GM12878 (cell line): ENCODE measurements at regions of chr19 and their contacts with region 1.

Region 1: DNA sequence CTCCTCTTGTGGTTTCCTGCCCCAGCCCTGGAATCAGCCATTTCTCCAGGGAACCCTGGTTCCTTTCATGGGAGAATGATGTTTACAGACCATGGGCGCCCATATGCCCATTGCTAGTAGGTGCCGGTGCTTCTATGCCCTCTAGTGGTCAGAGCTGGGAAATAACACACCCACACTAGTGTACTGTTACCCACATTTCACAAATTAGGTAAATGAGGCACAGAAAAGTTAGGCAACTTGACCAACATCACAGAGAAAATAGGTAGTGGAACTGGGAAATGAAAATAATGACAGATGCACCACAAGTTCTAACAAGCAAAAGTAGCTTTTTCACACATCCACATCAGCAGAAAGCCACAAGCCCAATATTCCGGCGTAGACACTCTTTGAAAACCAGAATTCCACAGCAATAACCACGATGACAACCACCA is 1.3 kb upstream of the CEACAM3 start:
- DNase-seq: peak; percentile 23
- ATAC-seq: peak; percentile 97
- H3K4me3 ChIP-seq: no peak overlapping the region
- H3K27ac ChIP-seq: no peak overlapping the region
- H3K4me1 ChIP-seq: no peaks in the 10 kb centered on the region; the same call in 1 of the 2 replicates
- H3K27me3 ChIP-seq: peaks cover 0 to 6% of the 10 kb centered on the region in 2 experiments; a peak in 2 of 4 replicates
- CTCF ChIP-seq: peak; percentile 52 to 84 (median 83)
- EP300 ChIP-seq: no peak
- POLR2A ChIP-seq: no peak
- RAD21 ChIP-seq: peak; percentile 16; the same call in 1 of the 2 replicates

Region 2: DNA sequence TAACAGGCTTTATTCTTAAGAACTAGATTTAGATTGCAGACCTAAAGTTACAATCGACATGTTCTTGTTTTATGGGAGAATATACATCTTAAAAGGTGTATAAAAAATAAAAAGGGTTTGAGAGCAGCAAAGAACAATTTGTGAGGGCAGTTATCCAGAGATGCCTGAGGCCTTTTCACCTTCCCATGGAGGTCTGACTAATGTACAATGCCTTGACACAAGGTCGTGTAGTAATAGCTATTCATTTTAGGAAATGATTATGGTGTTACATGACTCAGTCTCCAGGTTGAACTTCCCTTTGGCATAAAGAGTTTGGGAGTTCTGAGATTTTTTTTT is 19.7 kb before region 1 on chr19:
- CTCF ChIA-PET with region 1: interaction called, 16 read pairs
- POLR2A ChIA-PET with region 1: no interaction called
- RAD21 ChIA-PET with region 1: no interaction called
- SMC1A ChIA-PET with region 1: interaction called, 8 read pairs
- in situ Hi-C with region 1: no loop called
- intact Hi-C with region 1: no loop called
- DNase-seq: no peak
- ATAC-seq: no peak
- H3K4me3 ChIP-seq: no peak overlapping the region
- H3K27ac ChIP-seq: no peak overlapping the region
- H3K4me1 ChIP-seq: no peaks in the 10 kb centered on the region
- H3K27me3 ChIP-seq: no peaks in the 10 kb centered on the region; a peak in 3 of 4 replicates
- CTCF ChIP-seq: no peak
- EP300 ChIP-seq: no peak
- POLR2A ChIP-seq: no peak
- RAD21 ChIP-seq: no peak

Region 3: GRCh38 chr19:41821003-41821735 is 26.1 kb after region 1 on chr19:
- CTCF ChIA-PET with region 1: interaction called, 188 read pairs
- POLR2A ChIA-PET with region 1: interaction called, 4 read pairs
- RAD21 ChIA-PET with region 1: interaction called, 37 read pairs
- SMC1A ChIA-PET with region 1: interaction called, 47 read pairs
- in situ Hi-C with region 1: no loop called
- intact Hi-C with region 1: loop called (anchors 1 kb)
- DNase-seq: peak; percentile 12
- ATAC-seq: peak; percentile 93
- H3K4me3 ChIP-seq: no peak overlapping the region
- H3K27ac ChIP-seq: no peak overlapping the region
- H3K4me1 ChIP-seq: no peaks in the 10 kb centered on the region
- H3K27me3 ChIP-seq: no peaks in the 10 kb centered on the region
- CTCF ChIP-seq: peak; percentile 69 to 78 (median 72)
- EP300 ChIP-seq: no peak
- POLR2A ChIP-seq: no peak
- RAD21 ChIP-seq: peak; percentile 94

Region 4: DNA sequence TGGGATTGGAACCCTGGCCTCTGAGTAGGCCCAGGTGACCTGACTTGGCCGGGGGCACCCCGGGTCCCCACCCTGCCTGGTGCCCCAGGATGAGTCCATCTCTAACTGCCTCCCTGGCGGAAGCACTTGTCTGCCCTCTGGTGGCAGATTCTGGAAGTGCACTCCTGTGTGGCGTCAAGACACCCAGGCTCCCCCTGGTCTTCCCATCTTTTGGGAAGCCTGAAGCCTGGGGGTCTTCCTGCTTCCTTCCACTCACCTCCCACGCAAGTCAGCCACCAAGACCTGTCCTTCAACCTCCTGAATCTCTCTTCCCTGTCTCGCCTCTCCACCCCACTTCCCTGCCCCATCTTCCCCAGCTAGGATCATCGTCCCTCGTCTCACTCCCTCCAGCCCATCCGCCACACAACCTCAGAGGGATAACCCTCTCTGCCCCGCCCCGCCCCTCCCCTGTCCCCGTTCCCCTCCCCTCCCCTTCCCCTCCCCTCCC is 156.7 kb after region 1 on chr19:
- CTCF ChIA-PET with region 1: interaction called, 51 read pairs
- POLR2A ChIA-PET with region 1: no interaction called
- RAD21 ChIA-PET with region 1: no interaction called
- SMC1A ChIA-PET with region 1: interaction called, 3 read pairs
- in situ Hi-C with region 1: no loop called
- intact Hi-C with region 1: loop called (anchors 5 kb)
- DNase-seq: no peak
- ATAC-seq: peak; percentile 96
- H3K4me3 ChIP-seq: no peak overlapping the region
- H3K27ac ChIP-seq: no peak overlapping the region
- H3K4me1 ChIP-seq: peaks cover 8% of the 10 kb centered on the region
- H3K27me3 ChIP-seq: no peaks in the 10 kb centered on the region
- CTCF ChIP-seq: peak; percentile 96 to 99 (median 97)
- EP300 ChIP-seq: no peak
- POLR2A ChIP-seq: no peak
- RAD21 ChIP-seq: peak; percentile 97